Uterus (tissue), 4 donors: ENCODE measurements at regions of chr21 and their contacts with region 1.

Region 1: DNA sequence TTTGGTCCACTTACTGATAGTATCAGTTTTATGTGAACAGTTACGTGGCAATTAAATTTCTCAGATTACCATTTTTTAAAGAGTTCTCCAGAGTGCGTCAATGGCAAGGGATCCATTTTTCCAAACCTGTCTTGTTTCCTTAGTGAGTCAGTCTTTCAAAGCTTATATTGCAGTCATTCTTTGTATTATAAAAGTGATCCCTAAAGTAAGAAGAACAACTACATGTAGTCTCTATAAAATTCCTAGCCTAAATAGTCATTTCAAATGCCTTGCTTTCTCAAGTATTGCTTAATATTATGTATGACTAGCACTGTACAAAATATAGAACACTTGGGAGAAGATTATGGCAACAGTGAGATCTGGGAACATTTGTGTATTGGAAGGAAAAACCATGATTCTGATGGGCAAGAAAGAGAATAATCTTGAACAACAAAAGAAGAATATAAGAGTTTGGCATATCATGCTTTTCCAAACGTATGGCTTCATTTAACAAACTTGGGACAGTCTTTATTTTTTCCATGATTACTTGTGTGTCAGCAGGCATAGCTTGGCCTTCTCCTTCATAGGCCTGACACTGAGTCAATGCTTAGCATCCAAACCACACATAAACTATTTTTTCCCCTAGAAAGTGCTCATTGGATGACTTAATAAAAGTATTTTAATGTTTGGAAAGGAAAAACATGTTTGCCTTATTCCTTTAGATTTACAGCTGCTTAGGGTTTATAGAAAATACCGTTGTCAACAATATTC is 547.4 kb downstream of the LTN1 start:
- DNase-seq: no peak
- H3K4me3 ChIP-seq: no peak overlapping the region
- H3K27ac ChIP-seq: peak overlapping the region; percentile 47 to 60
- H3K4me1 ChIP-seq: peaks cover 0 to 3% of the 10 kb centered on the region in 2 donors
- H3K27me3 ChIP-seq: no peaks in the 10 kb centered on the region
- CTCF ChIP-seq: no peak
- POLR2A ChIP-seq: no peak

Region 2: DNA sequence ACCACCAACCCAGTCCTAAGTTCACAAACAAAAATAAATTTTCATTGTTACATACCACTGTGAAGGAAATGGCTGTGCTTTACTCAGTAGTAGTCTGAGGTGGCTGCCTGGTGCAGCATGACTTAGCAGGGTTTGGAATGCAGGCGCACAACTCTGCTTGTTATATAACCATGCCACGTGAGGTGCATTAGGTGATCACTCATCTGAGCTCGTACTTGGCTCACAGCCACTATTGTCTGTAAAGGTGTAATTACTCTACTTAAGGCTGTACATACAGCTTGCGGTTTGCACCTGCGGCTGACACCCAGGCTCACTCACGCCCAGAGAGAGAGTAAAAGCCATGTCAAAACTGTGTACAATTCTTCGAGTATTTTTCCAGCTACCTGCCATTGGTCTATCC is 52.0 kb before region 1 on chr21:
- intact Hi-C with region 1: no loop called
- DNase-seq: no peak
- H3K4me3 ChIP-seq: no peak overlapping the region
- H3K27ac ChIP-seq: no peak overlapping the region
- H3K4me1 ChIP-seq: no peaks in the 10 kb centered on the region
- H3K27me3 ChIP-seq: no peaks in the 10 kb centered on the region
- CTCF ChIP-seq: no peak
- POLR2A ChIP-seq: no peak

Region 3: GRCh38 chr21:28410256-28410655 is 35.0 kb before region 1 on chr21:
- intact Hi-C with region 1: loop called (anchors 2 kb)
- DNase-seq: no peak
- H3K4me3 ChIP-seq: no peak overlapping the region
- H3K27ac ChIP-seq: peak overlapping the region; percentile 24 to 38
- H3K4me1 ChIP-seq: no peaks in the 10 kb centered on the region
- H3K27me3 ChIP-seq: no peaks in the 10 kb centered on the region
- CTCF ChIP-seq: no peak
- POLR2A ChIP-seq: no peak

Region 4: GRCh38 chr21:28550057-28550825 is 105.0 kb after region 1 on chr21:
- intact Hi-C with region 1: no loop called
- DNase-seq: no peak
- H3K4me3 ChIP-seq: no peak overlapping the region
- H3K27ac ChIP-seq: no peak overlapping the region
- H3K4me1 ChIP-seq: no peaks in the 10 kb centered on the region
- H3K27me3 ChIP-seq: no peaks in the 10 kb centered on the region
- CTCF ChIP-seq: no peak
- POLR2A ChIP-seq: no peak

Region 5: GRCh38 chr21:28633839-28634555 is 188.7 kb after region 1 on chr21:
- intact Hi-C with region 1: no loop called
- DNase-seq: peak in 1 of 2 donors; percentile 40
- H3K4me3 ChIP-seq: no peak overlapping the region
- H3K27ac ChIP-seq: peak overlapping the region; percentile 13 to 69
- H3K4me1 ChIP-seq: no peaks in the 10 kb centered on the region
- H3K27me3 ChIP-seq: no peaks in the 10 kb centered on the region
- CTCF ChIP-seq: no peak
- POLR2A ChIP-seq: no peak